ENCODE measurements at regions of chr6 and their contacts with region 1.

Region 1: DNA sequence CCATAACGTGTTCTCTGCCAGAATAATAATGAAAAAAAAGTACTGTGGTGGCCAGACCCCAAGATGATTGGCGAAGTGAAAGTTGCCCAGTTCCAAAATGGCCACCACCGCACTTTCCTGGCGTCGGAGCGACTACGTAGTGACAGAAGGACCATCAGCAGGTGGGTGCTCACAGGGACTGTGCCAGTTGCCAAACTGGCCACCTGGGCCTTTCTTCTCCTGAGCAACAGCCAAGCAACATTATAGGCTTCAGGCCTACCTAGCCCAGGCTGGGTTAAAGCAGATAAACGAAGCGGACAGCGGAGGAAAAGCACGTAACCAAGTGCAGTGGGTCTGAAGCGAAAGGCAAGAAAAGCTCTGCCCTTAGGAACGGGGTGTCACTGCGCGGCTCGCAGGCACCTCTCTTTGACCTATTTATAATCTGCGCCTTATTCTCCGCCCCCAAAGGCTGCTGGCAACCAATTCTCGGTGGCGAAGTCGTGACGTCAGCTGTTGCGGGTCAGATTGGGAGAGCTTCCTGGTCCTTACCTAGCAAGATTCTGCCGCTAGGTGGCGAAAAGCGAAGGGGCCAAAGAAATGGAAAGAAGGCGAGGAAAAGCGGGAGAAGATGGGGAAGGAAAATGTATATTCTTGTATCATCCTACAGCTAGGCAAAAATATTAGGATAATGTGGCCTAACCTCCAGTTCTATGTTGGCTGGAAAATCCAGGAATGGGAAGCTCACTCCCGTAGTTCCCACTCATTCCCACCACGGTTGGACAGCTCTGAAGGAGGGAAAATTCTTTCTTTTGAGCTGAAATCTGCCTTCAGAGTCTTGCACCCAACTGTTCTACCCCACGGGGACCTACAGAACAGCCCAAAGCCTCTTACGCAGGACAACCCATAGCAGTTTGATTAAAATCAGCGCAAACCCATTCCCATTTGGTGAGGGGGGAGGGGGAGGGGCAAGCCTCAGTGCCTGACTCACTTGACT is 6.9 kb upstream of the MOG start:
- DNase-seq: peak; percentile 69
- H3K4me3 ChIP-seq: peak overlapping the region; percentile 59
- CTCF ChIP-seq: peak; percentile 88

Region 2: DNA sequence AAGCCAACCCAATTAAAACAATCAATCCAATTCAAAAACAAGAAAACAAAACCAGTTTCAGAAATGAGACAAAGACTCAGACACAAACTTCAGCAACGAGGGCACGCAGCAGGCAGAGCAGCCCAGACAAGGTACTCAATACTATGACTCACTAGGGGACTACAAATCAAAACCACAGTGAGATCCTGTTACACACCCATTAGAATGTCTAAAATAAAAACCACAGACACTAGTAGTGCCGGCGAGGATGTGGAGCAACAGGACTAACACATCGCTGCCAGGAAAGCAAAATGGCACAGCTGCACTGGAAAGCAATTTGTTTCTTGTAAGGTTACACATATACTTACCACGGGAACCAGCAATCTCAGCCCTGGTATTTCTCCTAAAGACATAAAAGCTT is 133.9 kb before region 1 on chr6:
- CTCF ChIA-PET with region 1: no interaction called
- POLR2A ChIA-PET with region 1: no interaction called
- DNase-seq: no peak
- H3K4me3 ChIP-seq: no peak overlapping the region
- CTCF ChIP-seq: no peak

Region 3: DNA sequence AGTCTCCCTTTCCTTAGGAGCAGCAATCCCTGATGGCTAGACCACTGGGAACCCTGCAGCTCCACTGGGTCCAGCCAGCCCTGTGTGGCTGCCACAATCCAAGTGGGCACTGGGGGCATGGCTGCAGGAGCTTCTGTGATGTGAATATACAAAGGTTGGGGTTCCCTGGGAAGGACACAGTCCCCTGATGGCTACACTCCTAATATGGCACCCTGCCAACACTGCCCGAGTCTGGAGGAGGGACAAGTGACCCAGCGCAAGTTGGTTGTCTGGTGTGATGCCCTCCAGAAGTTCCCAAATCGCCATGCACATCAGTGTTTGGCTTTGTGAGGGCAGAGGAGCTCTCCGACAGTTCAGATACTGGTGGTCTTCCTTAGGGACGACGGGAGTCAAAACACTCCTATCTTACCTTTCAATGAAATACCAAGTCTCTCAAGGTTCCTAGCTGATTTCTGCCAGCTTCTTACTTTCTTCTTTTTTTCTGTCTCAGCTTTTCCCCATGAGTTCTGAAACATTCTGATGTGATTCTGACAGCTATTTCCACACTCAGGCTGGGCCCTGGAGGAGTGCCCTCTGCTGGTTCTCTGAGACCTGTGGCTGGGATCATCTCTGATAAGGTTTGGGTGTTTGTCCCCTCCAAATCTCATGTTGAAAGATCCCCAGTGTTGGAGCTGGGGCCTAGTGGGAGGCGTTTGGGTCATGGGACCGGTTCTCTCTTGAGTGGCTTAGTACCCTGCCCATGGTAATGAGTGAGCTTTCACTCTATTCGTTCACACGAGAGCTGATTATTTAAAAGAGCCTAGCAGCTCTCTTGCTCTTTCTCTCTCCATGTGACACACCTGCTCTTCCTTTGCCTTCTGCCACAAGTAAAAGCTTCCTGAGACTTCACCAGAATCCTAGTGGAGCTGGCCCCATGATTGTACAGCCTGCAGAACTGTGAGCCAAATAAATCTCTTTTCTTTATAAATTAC is 46.5 kb after region 1 on chr6:
- CTCF ChIA-PET with region 1: interaction called, 93 read pairs
- POLR2A ChIA-PET with region 1: no interaction called
- DNase-seq: no peak
- H3K4me3 ChIP-seq: no peak overlapping the region
- CTCF ChIP-seq: peak; percentile 46

Region 4: DNA sequence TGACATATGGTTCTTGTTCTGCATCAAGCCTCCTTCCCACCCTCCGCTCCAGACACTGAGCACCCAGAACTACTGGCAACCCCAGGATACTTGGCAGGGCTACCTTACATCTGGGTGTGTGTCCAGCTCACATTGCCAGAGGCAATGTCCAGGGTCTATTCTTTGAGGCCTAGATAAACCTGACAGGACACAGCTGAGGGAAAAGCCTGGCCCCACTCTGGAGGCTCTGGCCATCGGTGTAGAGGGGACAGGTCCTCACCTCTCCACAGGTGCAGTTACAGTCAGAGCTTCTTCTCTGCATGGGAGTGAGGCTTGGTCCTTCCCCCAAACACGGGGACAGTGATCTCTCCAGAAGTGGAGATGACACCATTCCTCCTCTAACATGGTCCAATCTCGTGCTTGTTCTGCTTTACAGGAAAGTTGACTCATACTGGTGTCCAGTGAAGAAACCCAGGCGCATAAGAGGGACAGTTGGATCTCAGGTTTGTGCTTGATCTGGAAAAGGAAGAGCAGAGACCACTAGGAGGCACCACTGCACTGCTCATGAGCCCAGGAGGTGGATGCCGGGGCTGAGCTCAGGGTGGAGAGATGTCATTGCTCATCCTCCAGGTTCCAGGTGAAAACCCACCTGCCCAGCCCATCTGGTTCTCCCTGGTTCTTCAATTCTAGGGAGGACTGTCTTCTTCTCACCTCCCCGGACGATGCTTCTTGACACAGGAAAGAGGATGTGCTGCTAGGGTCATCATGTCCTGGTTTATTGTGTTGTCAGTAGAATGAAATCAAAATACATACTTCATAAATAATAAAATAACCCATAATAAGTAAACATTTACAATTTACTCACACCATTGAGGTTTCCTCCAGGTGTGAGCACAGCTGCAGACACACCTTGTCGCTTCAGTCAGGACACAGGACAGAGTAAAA is 88.0 kb after region 1 on chr6:
- CTCF ChIA-PET with region 1: interaction called, 13 read pairs
- POLR2A ChIA-PET with region 1: no interaction called
- DNase-seq: no peak
- H3K4me3 ChIP-seq: no peak overlapping the region
- CTCF ChIP-seq: peak; percentile 78

Region 5: DNA sequence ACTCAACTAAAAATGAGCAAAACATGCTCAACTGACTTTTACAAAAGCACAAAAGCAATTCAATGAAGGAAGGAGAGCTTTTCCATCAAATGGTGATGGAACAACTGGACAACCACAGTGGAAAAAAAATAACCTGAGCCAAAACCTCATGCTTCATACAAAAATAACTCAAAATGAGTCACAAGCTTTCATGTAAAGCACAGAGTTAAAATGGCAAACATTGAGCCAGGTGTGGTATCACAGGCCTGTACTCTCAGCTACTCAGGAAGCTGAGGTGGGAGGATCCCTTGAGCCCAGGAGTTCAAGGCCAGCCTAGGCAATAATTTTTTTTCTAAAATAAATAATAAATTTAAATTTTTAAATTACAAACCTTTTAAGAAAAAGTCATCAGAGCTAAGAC is 159.3 kb after region 1 on chr6:
- CTCF ChIA-PET with region 1: interaction called, 11 read pairs
- POLR2A ChIA-PET with region 1: no interaction called
- DNase-seq: no peak
- H3K4me3 ChIP-seq: no peak overlapping the region
- CTCF ChIP-seq: no peak